Right ventricle myocardium inferior (tissue), 1 donor: ENCODE measurements at regions of chr6 and their contacts with region 1.

Region 1: DNA sequence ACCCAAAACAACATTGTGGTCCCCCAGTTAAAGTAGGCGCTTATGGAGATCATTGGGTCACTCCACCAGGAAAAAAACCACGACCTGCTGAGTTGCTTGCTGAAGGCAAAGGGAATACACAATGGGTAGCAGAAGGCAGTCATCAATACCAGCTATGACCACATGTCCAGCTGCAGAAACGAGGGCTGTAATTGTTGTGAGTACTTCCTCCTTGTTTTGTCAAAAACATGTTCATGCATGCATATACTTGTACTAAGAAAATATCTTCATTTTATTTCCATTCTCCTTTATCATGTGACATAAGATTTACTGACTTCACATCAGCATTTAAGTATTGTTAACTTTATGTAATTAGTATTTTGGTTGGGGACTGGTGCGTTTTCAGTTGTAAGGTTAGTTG is 16.9 kb downstream of the SERINC1 start:
- DNase-seq: no peak
- ATAC-seq: no peak

Region 2: GRCh38 chr6:122416825-122417224 is 37.8 kb before region 1 on chr6:
- intact Hi-C with region 1: loop called (anchors 5 kb)
- DNase-seq: no peak
- ATAC-seq: peak; percentile 63

Region 3: GRCh38 chr6:122432816-122433215 is 21.9 kb before region 1 on chr6:
- intact Hi-C with region 1: no loop called
- DNase-seq: no peak
- ATAC-seq: no peak

Region 4: DNA sequence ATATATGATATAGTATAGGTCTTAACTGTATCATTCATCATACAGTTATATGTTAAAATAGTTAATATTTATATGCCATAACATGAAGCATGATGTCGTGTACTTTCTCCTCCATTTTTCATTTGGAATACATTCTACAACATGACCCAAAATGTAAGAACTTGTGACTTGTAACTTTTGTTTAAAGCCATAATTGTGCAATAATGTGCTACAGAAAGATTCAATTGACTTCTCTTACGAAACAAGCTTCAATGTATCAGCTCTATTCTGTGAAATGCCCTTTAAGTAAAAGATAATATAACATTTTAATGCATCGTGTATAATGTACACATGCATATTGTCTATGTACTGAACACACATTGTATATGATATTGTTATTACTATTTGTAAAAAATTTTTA is 248.2 kb after region 1 on chr6:
- intact Hi-C with region 1: no loop called
- DNase-seq: no peak
- ATAC-seq: no peak

Region 5: GRCh38 chr6:123997223-123997622 is 1542.5 kb after region 1 on chr6:
- intact Hi-C with region 1: no loop called
- DNase-seq: no peak
- ATAC-seq: no peak